A673 (cell line): ENCODE measurements at regions of chr7 and their contacts with region 1.

Region 1: DNA sequence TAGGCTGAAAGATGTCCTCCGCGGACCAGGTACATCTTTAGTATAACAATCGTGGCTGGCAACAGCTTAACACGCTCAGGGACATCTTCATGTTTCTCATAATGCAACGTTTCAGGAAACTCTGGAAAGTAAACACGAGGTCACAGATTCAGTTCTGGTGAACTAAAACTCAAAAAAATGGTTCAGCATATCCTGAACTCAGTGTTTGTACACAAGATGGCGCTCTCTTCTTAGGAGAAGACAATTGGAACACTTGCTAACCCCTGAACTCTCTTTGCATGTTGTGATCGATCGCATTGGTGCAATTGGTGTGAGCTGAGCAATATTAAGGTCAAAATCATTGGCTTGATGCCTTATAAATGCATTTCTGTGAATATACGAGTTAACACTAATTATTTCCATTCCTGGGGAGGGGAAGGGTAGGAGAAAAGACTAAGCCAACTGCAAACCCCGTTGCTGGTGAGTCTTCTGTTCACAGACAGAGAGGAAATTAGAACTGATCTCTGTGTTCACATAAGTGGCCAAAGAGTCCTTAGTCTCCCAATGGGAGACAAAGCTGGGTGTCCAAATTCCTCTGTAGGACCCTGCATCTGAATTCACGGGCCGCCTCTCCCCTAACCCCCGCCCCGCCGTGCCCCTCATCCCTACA is 52.6 kb upstream of the FAM180A start:
- DNase-seq: peak; percentile 84
- H3K4me3 ChIP-seq: no peak overlapping the region
- H3K27ac ChIP-seq: no peak overlapping the region
- H3K4me1 ChIP-seq: peaks cover 6% of the 10 kb centered on the region
- H3K27me3 ChIP-seq: no peaks in the 10 kb centered on the region
- CTCF ChIP-seq: peak; percentile 87

Region 2: GRCh38 chr7:135281363-135281949 is 519.7 kb before region 1 on chr7:
- CTCF ChIA-PET with region 1: no interaction called
- POLR2A ChIA-PET with region 1: no interaction called
- intact Hi-C with region 1: loop called (anchors 10 kb)
- DNase-seq: peak; percentile 89
- H3K4me3 ChIP-seq: no peak overlapping the region
- H3K27ac ChIP-seq: no peak overlapping the region
- H3K4me1 ChIP-seq: no peaks in the 10 kb centered on the region
- H3K27me3 ChIP-seq: no peaks in the 10 kb centered on the region
- CTCF ChIP-seq: peak; percentile 100

Region 3: GRCh38 chr7:135519233-135519688 is 281.9 kb before region 1 on chr7:
- CTCF ChIA-PET with region 1: no interaction called
- POLR2A ChIA-PET with region 1: no interaction called
- intact Hi-C with region 1: no loop called
- DNase-seq: no peak
- H3K4me3 ChIP-seq: no peak overlapping the region
- H3K27ac ChIP-seq: no peak overlapping the region
- H3K4me1 ChIP-seq: no peaks in the 10 kb centered on the region
- H3K27me3 ChIP-seq: no peaks in the 10 kb centered on the region
- CTCF ChIP-seq: no peak

Region 4: DNA sequence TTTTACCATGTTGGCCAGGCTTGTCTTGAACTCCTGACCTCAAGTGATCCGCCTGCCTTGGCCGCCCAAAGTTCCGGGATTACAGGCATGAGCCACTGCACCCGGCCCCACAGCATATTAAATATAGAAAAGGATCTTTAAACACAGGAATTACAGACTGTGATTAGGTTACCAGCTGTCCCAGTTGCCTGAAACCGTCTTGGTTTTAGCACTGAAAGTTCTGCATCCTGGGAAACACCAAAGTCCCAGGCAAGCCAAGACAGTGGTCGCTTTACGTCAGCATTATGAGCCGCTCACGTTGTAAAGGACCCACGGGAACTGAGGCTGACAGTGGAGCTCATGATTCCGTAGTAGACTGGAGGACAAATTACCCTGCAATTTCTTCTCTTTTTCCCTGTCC is 16.4 kb after region 1 on chr7:
- CTCF ChIA-PET with region 1: no interaction called
- POLR2A ChIA-PET with region 1: no interaction called
- intact Hi-C with region 1: no loop called
- DNase-seq: no peak
- H3K4me3 ChIP-seq: no peak overlapping the region
- H3K27ac ChIP-seq: no peak overlapping the region
- H3K4me1 ChIP-seq: peaks cover 12% of the 10 kb centered on the region
- H3K27me3 ChIP-seq: no peaks in the 10 kb centered on the region
- CTCF ChIP-seq: no peak

Region 5: DNA sequence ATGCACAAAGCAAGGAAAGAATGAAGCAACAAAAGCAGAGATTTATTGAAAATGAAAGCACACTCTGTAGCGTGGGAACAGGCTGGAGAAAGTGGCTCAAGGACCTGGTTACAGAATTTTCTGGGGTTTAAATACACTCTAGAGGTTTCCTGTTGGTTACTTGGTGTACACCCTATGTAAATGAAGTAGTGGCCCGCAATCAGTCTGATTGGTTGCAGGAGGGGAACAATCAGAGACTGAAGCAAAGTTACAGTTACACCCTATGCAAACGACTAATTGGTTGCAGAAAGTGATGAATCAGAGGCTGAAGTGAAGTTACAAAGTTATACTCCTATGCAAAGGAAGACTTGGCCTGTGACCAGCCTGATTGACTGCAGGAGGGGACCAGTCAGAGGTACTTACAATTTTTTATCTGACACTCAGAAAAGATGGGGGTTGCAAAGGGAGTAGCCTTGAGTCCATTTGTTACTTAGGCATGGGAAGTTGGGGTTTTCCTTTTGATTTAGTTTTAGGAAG is 179.6 kb after region 1 on chr7:
- CTCF ChIA-PET with region 1: no interaction called
- POLR2A ChIA-PET with region 1: no interaction called
- intact Hi-C with region 1: no loop called
- DNase-seq: peak; percentile 93
- H3K4me3 ChIP-seq: peak overlapping the region; percentile 38
- H3K27ac ChIP-seq: peak overlapping the region; percentile 60
- H3K4me1 ChIP-seq: peaks cover 22% of the 10 kb centered on the region
- H3K27me3 ChIP-seq: no peaks in the 10 kb centered on the region
- CTCF ChIP-seq: no peak

Region 6: DNA sequence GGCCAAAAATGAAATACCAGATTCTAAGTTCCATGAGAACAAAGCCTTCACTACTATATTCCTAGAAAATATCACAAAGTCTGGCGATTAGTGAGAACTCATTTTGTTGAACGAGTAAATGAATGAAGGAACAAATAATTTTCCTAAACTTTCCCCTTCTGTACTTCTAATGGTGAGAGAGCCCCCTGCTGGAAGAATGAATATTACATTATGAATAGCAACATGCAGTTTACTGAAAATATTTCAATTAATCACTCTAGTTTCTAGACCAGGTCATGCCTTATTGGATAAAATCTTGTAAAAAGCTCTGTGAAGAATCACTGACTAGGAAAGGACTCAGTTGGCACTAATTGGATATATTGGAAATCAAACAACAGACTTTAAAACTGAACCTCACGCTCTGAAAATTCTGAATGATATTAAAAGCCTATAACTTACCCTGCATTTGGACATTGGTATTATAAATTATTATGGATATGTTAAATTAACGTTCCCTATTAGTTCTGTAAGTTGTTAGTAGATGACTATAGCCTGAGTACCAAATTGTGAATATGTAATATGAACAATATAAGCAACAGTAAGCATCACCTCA is 208.4 kb after region 1 on chr7:
- CTCF ChIA-PET with region 1: no interaction called
- POLR2A ChIA-PET with region 1: no interaction called
- intact Hi-C with region 1: loop called (anchors 1 kb)
- DNase-seq: peak; percentile 76
- H3K4me3 ChIP-seq: no peak overlapping the region
- H3K27ac ChIP-seq: no peak overlapping the region
- H3K4me1 ChIP-seq: no peaks in the 10 kb centered on the region
- H3K27me3 ChIP-seq: no peaks in the 10 kb centered on the region
- CTCF ChIP-seq: peak; percentile 79

Region 7: DNA sequence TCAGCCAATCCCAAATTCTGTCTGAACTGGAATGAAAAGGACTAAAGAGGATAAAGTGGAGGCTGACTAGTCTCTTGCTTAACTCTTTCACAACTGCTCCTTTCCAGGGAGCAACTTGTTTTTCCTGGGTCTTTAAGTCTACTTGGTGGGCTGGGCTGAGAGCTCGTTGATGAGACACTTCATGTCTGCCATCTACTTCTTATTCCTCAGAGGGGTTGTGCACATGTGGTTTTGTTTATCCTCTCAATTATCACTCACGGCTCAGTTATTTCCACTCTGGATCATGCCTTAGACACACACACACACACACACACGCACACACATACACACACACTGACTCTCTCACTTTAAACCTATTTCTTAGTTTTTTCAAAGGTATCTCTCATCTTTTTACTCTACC is 474.6 kb after region 1 on chr7:
- CTCF ChIA-PET with region 1: no interaction called
- POLR2A ChIA-PET with region 1: no interaction called
- intact Hi-C with region 1: loop called (anchors 10 kb)
- DNase-seq: peak; percentile 77
- H3K4me3 ChIP-seq: no peak overlapping the region
- H3K27ac ChIP-seq: peak overlapping the region; percentile 58
- H3K4me1 ChIP-seq: peaks cover 29% of the 10 kb centered on the region
- H3K27me3 ChIP-seq: no peaks in the 10 kb centered on the region
- CTCF ChIP-seq: no peak

Region 8: DNA sequence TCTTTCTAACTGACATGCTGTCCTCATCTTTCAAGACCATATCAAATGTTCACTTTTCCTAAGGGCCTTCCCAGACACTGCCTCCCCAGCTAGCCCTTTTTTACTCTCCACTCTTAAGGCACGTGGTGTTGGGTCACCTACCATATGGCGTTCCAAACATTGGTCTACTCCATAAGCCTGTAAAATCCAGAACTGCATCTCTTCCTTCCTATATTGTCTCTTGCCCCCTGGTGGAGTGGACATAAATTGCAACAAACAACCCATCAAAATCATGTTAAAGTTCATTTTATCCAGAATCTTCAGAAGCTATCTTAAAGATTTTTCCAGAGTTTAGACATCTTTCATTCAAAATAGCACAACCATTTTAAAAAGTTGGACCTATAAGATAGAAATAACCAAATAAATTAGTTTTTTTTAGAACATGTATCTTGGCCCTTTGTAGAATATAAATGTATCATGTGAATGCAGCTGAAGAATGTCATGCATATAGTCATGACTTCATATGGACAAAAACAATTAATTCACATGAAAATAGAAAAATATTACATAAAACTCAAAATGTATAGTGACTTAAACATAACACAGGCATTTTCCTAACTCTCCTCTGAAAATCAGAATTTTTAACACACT is 886.6 kb after region 1 on chr7:
- CTCF ChIA-PET with region 1: no interaction called
- POLR2A ChIA-PET with region 1: no interaction called
- intact Hi-C with region 1: loop called (anchors 5 kb)
- DNase-seq: peak; percentile 75
- H3K4me3 ChIP-seq: no peak overlapping the region
- H3K27ac ChIP-seq: no peak overlapping the region
- H3K4me1 ChIP-seq: no peaks in the 10 kb centered on the region
- H3K27me3 ChIP-seq: no peaks in the 10 kb centered on the region
- CTCF ChIP-seq: peak; percentile 80

Region 9: GRCh38 chr7:136874238-136875032 is 1073.3 kb after region 1 on chr7:
- CTCF ChIA-PET with region 1: interaction called, 3 read pairs
- POLR2A ChIA-PET with region 1: no interaction called
- intact Hi-C with region 1: loop called (anchors 5 kb)
- DNase-seq: peak; percentile 72
- H3K4me3 ChIP-seq: no peak overlapping the region
- H3K27ac ChIP-seq: no peak overlapping the region
- H3K4me1 ChIP-seq: peaks cover 11% of the 10 kb centered on the region
- H3K27me3 ChIP-seq: peaks cover 21% of the 10 kb centered on the region
- CTCF ChIP-seq: peak; percentile 77

Region 10: DNA sequence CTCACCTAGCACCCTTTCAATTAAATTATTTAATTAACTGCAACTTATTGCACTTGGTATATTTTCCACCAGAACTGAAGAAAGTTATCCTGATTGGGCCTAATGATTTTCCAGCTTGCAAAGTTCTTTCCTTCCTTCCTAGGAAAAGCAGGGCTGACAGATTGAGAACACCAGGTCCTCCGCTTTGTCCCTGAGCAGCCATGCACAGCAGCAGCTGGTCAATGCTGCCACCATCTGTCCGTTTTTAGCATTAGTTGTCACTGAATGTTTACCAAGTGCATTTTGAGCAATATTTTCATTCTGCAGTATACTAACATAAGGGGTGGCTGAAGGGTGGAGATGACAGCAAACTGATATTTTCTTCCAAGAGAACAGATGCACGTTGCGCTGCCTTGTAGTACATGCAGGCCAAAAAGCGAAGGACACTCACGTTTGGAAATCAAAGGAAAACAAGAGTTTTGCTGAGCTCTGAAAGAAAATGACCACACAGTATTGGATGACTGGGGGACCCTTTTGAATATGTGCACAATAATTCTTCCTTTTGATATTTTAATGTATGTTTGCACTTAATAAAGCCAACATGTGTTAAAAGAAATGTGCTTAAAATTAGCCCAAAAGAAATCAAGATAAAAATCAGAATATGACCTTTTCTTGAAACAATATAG is 1791.2 kb after region 1 on chr7:
- CTCF ChIA-PET with region 1: no interaction called
- POLR2A ChIA-PET with region 1: no interaction called
- intact Hi-C with region 1: loop called (anchors 5 kb)
- DNase-seq: peak; percentile 82
- H3K4me3 ChIP-seq: no peak overlapping the region
- H3K27ac ChIP-seq: peak overlapping the region; percentile 58
- H3K4me1 ChIP-seq: peaks cover 10% of the 10 kb centered on the region
- H3K27me3 ChIP-seq: no peaks in the 10 kb centered on the region
- CTCF ChIP-seq: peak; percentile 88